Calu3 (cell line): ENCODE measurements at regions of chr1 and their contacts with region 1.

Region 1: GRCh38 chr1:93021539-93022134 is 57.4 kb upstream of the MTF2 start:
- DNase-seq: no peak
- H3K4me3 Mint-ChIP-seq: no peak overlapping the region
- H3K27ac Mint-ChIP-seq: no peak overlapping the region
- H3K4me1 Mint-ChIP-seq: peaks cover 5% of the 10 kb centered on the region
- H3K27me3 Mint-ChIP-seq: peaks cover 32% of the 10 kb centered on the region
- CTCF ChIP-seq: peak; percentile 67

Region 2: DNA sequence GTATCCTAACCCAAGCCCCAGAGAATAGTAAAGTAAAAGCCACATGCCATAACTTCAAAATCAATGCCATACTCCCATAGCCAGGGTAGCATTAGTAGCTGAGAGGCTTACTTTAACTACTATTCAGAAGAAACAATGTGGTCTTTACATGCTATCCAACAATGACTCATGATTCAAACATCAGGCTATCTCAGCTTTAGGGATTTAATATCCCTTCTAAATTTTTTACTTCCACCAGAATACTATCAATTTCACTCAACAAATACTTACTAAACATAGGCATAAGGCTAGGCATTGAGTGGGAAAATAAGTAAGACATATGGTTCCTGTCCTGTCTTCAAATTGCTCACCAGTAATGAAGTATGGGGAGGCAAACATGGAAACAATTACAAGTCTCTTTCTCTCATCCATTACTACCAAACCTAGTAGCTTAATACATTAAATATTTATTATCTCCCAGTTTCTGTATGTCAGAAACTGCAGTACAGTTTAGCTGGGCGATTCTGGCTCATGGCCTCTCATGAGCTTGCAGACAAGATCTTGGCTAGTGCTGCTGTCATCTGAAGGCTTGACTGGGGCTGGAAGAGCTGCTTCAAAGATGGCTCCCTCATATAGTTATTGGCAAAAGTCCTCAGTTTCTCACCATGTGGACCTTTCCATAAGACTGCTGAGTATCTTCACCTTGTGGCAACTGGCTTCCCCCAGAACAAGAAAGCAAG is 267.5 kb before region 1 on chr1:
- CTCF ChIA-PET with region 1: no interaction called
- intact Hi-C with region 1: no loop called
- DNase-seq: no peak
- H3K4me3 Mint-ChIP-seq: no peak overlapping the region
- H3K27ac Mint-ChIP-seq: peak overlapping the region; percentile 57
- H3K4me1 Mint-ChIP-seq: peaks cover 22% of the 10 kb centered on the region
- H3K27me3 Mint-ChIP-seq: no peaks in the 10 kb centered on the region
- CTCF ChIP-seq: no peak

Region 3: GRCh38 chr1:93061895-93062792 is 40.5 kb after region 1 on chr1:
- CTCF ChIA-PET with region 1: no interaction called
- intact Hi-C with region 1: loop called (anchors 1 kb)
- DNase-seq: peak; percentile 47
- H3K4me3 Mint-ChIP-seq: no peak overlapping the region
- H3K27ac Mint-ChIP-seq: no peak overlapping the region
- H3K4me1 Mint-ChIP-seq: no peaks in the 10 kb centered on the region
- H3K27me3 Mint-ChIP-seq: peaks cover 13% of the 10 kb centered on the region
- CTCF ChIP-seq: peak; percentile 51